GM12878 (cell line): ENCODE measurements at regions of chr10 and their contacts with region 1.

Region 1: GRCh38 chr10:73096449-73097304 is at the start of gene P4HA1:
- DNase-seq: peak; percentile 96
- ATAC-seq: peak; percentile 94
- H3K4me3 ChIP-seq: peak within 1 kb of the TSS; percentile 95
- H3K27ac ChIP-seq: peak within 1 kb of the TSS; percentile 89
- H3K4me1 ChIP-seq: peaks cover 6% of the 10 kb centered on the region; the same call in 1 of the 2 replicates
- H3K27me3 ChIP-seq: no peaks in the 10 kb centered on the region
- CTCF ChIP-seq: peak; percentile 70 to 87 (median 70)
- EP300 ChIP-seq: peak in 1 of 2 experiments; percentile 41; a peak in 1 of 4 replicates
- POLR2A ChIP-seq: peak; percentile 99
- RAD21 ChIP-seq: peak; percentile 72
- polyA plus RNA-seq, gene P4HA1: 15.0 to 17.6 TPM

Region 2: DNA sequence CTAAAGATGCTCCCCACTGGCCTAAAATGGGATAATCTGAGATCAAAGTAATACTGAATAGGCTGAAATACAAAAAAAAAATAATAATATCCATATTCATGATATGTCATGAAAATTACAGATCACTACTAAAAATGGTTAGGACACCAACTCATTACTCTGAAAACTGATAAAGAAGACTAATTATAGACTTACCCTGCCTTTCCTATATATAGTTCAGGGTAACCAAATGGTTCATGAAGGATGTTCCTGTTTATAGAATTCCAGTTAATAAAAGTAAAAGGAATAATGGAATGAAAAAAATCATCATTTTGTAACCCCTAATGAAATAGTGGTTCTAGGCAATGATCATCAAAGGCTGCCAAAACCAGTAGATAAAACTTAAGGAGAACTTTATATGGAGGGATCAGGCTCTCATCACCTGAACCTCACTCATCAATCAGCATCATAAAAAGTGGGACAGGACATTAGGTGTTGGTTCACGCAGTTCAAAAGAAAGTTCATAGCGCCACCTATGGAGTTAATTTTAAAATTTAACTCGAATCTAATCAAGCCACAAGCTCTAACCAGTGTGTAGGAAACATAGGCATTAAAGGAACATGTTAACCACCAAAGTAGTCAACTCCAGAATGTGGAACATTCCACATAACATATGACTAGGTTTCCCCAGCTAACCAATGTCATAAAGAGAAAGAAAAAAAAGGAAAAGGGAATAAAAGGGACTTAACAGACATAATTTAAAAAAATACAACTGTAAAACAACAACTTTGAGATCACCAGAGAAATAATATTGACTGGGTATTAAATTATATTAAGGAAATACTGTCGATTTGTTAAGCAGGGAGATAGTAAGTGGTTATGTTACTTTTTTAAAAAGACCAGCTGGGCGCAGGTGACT is 35.7 kb before region 1 on chr10:
- CTCF ChIA-PET with region 1: interaction called, 11 read pairs
- POLR2A ChIA-PET with region 1: interaction called, 7 read pairs
- RAD21 ChIA-PET with region 1: interaction called, 9 read pairs
- SMC1A ChIA-PET with region 1: interaction called, 20 read pairs
- in situ Hi-C with region 1: no loop called
- intact Hi-C with region 1: no loop called
- DNase-seq: no peak
- ATAC-seq: peak; percentile 87
- H3K4me3 ChIP-seq: no peak overlapping the region
- H3K27ac ChIP-seq: no peak overlapping the region
- H3K4me1 ChIP-seq: peaks cover 2% of the 10 kb centered on the region; the same call in 1 of the 2 replicates
- H3K27me3 ChIP-seq: no peaks in the 10 kb centered on the region
- CTCF ChIP-seq: peak; percentile 27 to 53 (median 49); a peak in 5 of 6 replicates
- EP300 ChIP-seq: no peak
- POLR2A ChIP-seq: no peak
- RAD21 ChIP-seq: no peak; the same call in 1 of the 2 replicates

Region 3: DNA sequence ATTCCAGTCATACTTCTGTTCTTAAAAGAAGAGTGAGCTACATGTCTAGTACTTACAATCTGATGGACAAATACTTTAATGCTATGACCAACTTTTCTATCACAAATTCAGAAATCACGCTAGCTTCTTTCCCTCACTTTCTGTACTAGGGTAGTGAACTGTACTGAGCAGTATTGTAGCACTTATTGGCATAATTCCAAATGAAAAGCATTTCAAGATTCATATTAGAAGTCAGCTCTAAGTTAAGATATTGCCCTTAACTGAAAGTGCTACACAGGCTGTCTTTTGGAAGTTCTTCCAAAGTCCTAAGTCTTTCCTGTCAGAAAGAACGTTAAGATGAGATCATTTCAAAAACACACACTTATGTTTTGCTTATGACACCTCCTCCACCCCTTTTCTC is 13.5 kb before region 1 on chr10:
- CTCF ChIA-PET with region 1: interaction called, 55 read pairs
- POLR2A ChIA-PET with region 1: interaction called, 47 read pairs
- RAD21 ChIA-PET with region 1: interaction called, 90 read pairs
- SMC1A ChIA-PET with region 1: interaction called, 114 read pairs
- in situ Hi-C with region 1: no loop called
- intact Hi-C with region 1: no loop called
- DNase-seq: no peak
- ATAC-seq: no peak
- H3K4me3 ChIP-seq: no peak overlapping the region
- H3K27ac ChIP-seq: no peak overlapping the region
- H3K4me1 ChIP-seq: peaks cover 10% of the 10 kb centered on the region
- H3K27me3 ChIP-seq: no peaks in the 10 kb centered on the region
- CTCF ChIP-seq: no peak
- EP300 ChIP-seq: no peak
- POLR2A ChIP-seq: no peak
- RAD21 ChIP-seq: no peak

Region 4: DNA sequence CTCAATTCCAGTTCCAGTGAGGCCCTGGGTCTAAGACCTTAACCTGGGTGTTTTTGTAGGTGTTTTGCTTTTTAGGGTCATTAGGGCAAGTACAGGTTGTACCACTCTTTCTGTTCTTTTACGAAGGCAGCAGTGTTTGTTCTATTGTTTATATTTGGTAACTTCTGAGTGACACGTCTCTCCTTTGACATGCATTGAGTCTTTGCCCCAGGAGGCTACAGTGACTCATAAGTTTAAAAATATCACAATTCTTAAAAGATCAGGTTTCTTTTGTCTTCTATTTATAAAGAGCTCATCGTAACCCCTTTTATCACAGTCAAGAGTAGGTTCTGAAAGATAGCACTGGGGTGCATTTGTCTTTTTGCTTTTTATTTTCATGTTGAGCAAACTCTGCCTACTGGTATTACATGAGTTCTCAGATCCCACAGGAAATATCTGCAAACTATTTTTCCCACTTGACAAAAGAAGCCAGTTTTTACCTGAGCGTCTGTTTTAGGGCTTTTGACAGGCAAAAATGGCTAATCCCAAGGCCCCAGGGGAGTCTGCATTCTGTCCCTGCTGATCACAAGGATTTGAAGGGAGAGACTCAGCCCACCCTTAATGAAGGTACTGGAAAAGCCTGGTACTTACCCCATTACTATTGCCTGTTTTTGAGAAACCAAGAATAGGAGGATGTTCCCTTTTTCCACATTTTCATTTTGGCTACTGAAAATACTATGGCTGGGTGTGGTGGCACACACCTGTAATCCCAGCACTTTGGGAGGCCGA is 21.5 kb after region 1 on chr10:
- CTCF ChIA-PET with region 1: interaction called, 14 read pairs
- POLR2A ChIA-PET with region 1: interaction called, 37 read pairs
- RAD21 ChIA-PET with region 1: interaction called, 33 read pairs
- SMC1A ChIA-PET with region 1: interaction called, 12 read pairs
- in situ Hi-C with region 1: no loop called
- intact Hi-C with region 1: no loop called
- DNase-seq: peak; percentile 83
- ATAC-seq: peak; percentile 89
- H3K4me3 ChIP-seq: 0 out of 2 replicates have a peak overlapping the region, but pooled peaks have one; percentile 2
- H3K27ac ChIP-seq: peak overlapping the region; percentile 96
- H3K4me1 ChIP-seq: peaks cover 20% of the 10 kb centered on the region
- H3K27me3 ChIP-seq: no peaks in the 10 kb centered on the region
- CTCF ChIP-seq: no peak
- EP300 ChIP-seq: peak; percentile 62 to 86
- POLR2A ChIP-seq: no peak
- RAD21 ChIP-seq: no peak

Region 5: GRCh38 chr10:73159038-73159648 is 62.5 kb after region 1 on chr10:
- CTCF ChIA-PET with region 1: interaction called, 110 read pairs
- POLR2A ChIA-PET with region 1: interaction called, 13 read pairs
- RAD21 ChIA-PET with region 1: interaction called, 58 read pairs
- SMC1A ChIA-PET with region 1: interaction called, 61 read pairs
- in situ Hi-C with region 1: loop called (anchors 5 kb)
- intact Hi-C with region 1: loop called (anchors 2 kb)
- DNase-seq: peak; percentile 30
- ATAC-seq: peak; percentile 53; the same call in 2 of the 3 replicates
- H3K4me3 ChIP-seq: no peak overlapping the region
- H3K27ac ChIP-seq: no peak overlapping the region
- H3K4me1 ChIP-seq: no peaks in the 10 kb centered on the region
- H3K27me3 ChIP-seq: no peaks in the 10 kb centered on the region
- CTCF ChIP-seq: peak; percentile 62 to 81 (median 64)
- EP300 ChIP-seq: no peak
- POLR2A ChIP-seq: no peak
- RAD21 ChIP-seq: peak; percentile 73

Region 6: DNA sequence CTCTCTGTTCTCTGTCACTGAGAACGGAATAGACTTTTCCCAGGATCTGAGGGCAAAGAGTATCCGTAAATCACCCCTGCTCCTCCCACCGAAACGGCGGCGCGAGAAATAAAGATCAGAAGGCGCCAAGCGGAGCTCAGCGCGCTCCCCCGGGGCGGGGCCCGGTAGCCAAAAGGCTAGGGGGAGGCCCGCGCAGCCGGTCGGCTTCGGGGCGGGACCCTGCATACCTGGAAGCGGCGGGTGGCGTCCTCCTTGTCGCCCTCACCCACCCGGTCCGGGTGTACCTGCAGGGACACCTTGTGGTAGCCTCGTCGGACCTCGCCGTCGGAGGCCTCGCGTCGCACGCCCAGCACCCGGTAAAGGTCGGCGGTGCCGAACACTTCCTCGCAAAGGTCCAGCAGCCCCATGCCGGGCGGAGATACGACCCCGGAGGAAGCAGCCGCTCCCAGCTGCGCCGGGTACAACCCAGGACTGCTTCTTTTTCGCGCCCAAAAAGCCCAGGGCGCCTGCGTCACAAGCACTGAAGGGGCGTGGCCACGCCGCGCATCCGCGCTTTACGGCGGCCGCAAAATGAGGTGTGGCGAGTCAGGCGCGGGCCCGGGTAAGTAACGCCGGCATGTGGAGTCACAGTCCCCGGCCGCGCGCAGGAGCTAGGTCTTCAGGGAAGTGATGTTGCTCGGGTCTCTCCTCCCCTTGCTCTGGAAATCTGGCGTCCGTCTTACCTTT is 150.3 kb after region 1 on chr10 and contains the start of gene DNAJC9:
- CTCF ChIA-PET with region 1: interaction called, 6 read pairs
- POLR2A ChIA-PET with region 1: interaction called, 19 read pairs
- RAD21 ChIA-PET with region 1: interaction called, 17 read pairs
- SMC1A ChIA-PET with region 1: no interaction called
- in situ Hi-C with region 1: no loop called
- intact Hi-C with region 1: loop called (anchors 2 kb)
- DNase-seq: peak; percentile 85
- ATAC-seq: peak; percentile 91
- H3K4me3 ChIP-seq: peak within 1 kb of the TSS; percentile 89
- H3K27ac ChIP-seq: peak within 1 kb of the TSS; percentile 88
- H3K4me1 ChIP-seq: peaks cover 10% of the 10 kb centered on the region
- H3K27me3 ChIP-seq: no peaks in the 10 kb centered on the region
- CTCF ChIP-seq: peak in 1 of 3 experiments; percentile 5; a peak in 1 of 6 replicates
- EP300 ChIP-seq: no peak
- POLR2A ChIP-seq: peak; percentile 98
- RAD21 ChIP-seq: no peak
- polyA plus RNA-seq, gene DNAJC9: 15.0 to 16.0 TPM

Region 7: DNA sequence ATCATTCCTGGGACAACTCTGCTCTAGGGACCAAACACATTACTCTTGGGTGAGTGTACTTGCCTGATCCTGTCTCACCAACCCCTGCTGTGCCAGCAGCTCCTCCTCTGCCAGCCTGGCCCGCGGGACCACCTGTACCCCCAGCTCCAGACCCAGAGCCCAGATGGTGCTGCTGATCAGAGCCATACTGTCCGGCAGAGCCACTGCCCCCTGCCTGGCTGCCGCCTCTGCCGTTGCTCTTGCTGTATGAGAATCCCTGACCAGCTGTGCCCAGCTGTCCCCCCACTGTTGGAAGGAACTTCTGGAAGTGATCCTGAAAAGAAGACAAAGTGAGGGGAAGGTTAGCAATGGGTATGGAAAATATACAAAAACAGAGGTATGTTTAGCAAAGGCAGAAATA is 537.7 kb after region 1 on chr10:
- CTCF ChIA-PET with region 1: no interaction called
- POLR2A ChIA-PET with region 1: no interaction called
- RAD21 ChIA-PET with region 1: no interaction called
- SMC1A ChIA-PET with region 1: no interaction called
- in situ Hi-C with region 1: no loop called
- intact Hi-C with region 1: no loop called
- DNase-seq: no peak
- ATAC-seq: no peak
- H3K4me3 ChIP-seq: no peak overlapping the region
- H3K27ac ChIP-seq: no peak overlapping the region
- H3K4me1 ChIP-seq: no peaks in the 10 kb centered on the region
- H3K27me3 ChIP-seq: no peaks in the 10 kb centered on the region
- CTCF ChIP-seq: no peak
- EP300 ChIP-seq: no peak
- POLR2A ChIP-seq: no peak
- RAD21 ChIP-seq: no peak